ENCODE measurements at regions of chr22 and their contacts with region 1.

Region 1: DNA sequence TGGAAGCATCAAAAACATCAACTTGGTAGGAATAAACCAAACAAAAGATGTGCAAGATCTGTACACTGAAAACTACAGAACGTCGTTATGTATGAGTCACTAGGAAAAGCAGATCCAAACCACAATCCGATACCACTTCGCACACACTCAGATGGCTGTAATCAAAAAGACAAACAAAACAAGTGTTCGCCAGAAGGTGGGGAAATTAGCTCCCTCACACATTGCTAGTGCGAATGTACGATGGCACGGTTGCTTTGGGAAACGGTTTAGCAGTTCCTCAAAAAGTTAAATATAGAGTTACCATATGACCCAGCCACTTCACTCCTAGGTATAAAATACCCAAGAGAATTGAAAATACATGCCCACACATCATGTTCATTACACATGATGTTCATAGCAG is 14.8 kb upstream of the CARD10 start:
- DNase-seq: no peak
- H3K4me3 ChIP-seq: no peak overlapping the region
- H3K4me1 ChIP-seq: no peaks in the 10 kb centered on the region; the same call in 1 of the 2 replicates
- H3K27me3 ChIP-seq: no peaks in the 10 kb centered on the region

Region 2: GRCh38 chr22:36977947-36978660 is 555.9 kb before region 1 on chr22:
- in situ Hi-C with region 1: no loop called
- DNase-seq: peak; percentile 83 to 94
- H3K4me3 ChIP-seq: peak overlapping the region; percentile 5
- H3K4me1 ChIP-seq: peaks cover 2% of the 10 kb centered on the region; the same call in 1 of the 2 replicates
- H3K27me3 ChIP-seq: peaks cover 5% of the 10 kb centered on the region; the same call in 1 of the 2 replicates

Region 3: GRCh38 chr22:37599153-37599552 is 65.2 kb after region 1 on chr22:
- in situ Hi-C with region 1: loop called (anchors 5 kb)
- DNase-seq: peak in 1 of 2 experiments; percentile 38
- H3K4me3 ChIP-seq: no peak overlapping the region
- H3K4me1 ChIP-seq: no peaks in the 10 kb centered on the region; the same call in 1 of the 2 replicates
- H3K27me3 ChIP-seq: no peaks in the 10 kb centered on the region; the same call in 1 of the 2 replicates

Measured in HAP-1 (cell line).